Activated CD8-positive, alpha-beta T cell treated with anti-CD3 and anti-CD28 coated beads for 36 hours (primary cell): ENCODE measurements at regions of chr10 and their contacts with region 1.

Region 1: GRCh38 chr10:28393966-28394568 is 91.2 kb upstream of the MPP7 start:
- DNase-seq: peak; percentile 80
- ATAC-seq: peak; percentile 89
- H3K4me3 Mint-ChIP-seq: no peak overlapping the region
- H3K27ac Mint-ChIP-seq: no peak overlapping the region
- H3K4me1 Mint-ChIP-seq: peaks cover 4% of the 10 kb centered on the region
- H3K27me3 Mint-ChIP-seq: peaks cover 2% of the 10 kb centered on the region
- CTCF ChIP-seq: peak; percentile 94

Region 2: DNA sequence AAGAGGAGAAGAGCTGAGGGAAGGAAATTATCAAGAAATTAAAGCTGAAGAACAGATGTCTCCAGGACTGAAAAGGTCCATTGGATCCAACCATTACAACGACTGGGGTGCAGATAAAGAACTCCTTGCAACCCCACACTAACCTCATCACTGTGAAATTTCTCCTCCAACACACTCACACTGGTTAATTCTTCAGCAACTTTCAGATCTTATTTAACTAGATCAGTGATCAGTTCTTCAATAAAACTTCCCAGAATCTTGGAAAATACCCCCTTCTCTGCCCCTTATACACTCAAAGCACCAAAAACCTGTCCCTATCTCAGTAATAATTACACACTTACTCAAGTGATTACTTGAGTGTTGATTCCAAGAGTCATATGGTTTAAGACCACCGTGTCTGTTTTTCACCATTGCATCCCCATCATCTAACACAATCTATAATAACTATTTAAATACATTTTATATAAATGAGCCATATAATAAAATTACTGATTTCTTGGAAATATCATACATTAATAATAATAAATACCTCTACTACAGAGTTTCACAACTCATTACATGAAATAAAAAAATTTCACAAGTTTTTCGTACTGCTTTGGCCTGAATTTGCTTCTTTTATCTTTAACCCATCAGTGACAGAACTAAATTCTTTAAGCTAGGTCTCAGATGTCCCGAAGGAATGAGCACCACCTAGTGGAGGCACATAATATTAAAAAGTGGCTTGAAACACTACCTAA is 214.9 kb before region 1 on chr10:
- CTCF ChIA-PET with region 1: interaction called, 11 read pairs
- POLR2A ChIA-PET with region 1: no interaction called
- intact Hi-C with region 1: no loop called
- DNase-seq: peak; percentile 59
- ATAC-seq: peak; percentile 43
- H3K4me3 Mint-ChIP-seq: peak overlapping the region; percentile 70
- H3K27ac Mint-ChIP-seq: peak overlapping the region; percentile 91
- H3K4me1 Mint-ChIP-seq: peaks cover 37% of the 10 kb centered on the region
- H3K27me3 Mint-ChIP-seq: no peaks in the 10 kb centered on the region
- CTCF ChIP-seq: peak; percentile 78

Region 3: GRCh38 chr10:28241741-28242399 is 152.2 kb before region 1 on chr10:
- CTCF ChIA-PET with region 1: interaction called, 28 read pairs
- POLR2A ChIA-PET with region 1: no interaction called
- intact Hi-C with region 1: no loop called
- DNase-seq: peak; percentile 65
- ATAC-seq: peak; percentile 83
- H3K4me3 Mint-ChIP-seq: no peak overlapping the region
- H3K27ac Mint-ChIP-seq: no peak overlapping the region
- H3K4me1 Mint-ChIP-seq: peaks cover 27% of the 10 kb centered on the region
- H3K27me3 Mint-ChIP-seq: no peaks in the 10 kb centered on the region
- CTCF ChIP-seq: peak; percentile 93

Region 4: DNA sequence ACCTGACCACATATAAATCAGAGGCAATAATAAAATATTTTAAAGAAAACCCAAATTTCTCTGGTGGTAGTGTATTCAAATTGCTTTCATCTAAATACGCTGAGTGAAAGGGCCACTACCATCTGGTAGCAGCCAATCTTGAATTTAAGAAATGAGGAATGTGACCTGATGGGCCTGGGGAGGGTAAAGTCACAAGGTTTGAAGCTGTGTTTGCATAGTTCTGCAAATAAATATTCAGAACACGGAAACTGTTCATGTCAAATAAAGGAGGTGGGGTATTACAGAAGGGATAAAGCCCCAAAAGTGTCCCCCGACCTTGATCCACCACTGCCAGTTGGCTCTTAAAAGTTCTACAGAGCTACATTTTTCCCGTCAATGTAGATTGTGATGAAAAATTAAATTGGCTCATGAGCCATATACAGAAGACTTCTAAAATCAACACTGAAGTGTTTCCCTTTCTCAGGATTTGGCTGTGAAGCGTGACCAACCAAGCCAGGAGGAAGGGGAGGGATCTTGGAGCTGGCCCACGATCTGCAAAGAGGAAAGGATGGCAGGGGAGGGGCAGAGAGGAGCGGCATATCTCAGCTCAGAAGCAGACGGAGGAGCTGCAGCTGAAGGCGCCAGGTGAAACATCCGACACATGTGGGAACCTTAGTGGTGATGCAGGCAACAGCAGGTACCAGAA is 130.8 kb before region 1 on chr10:
- CTCF ChIA-PET with region 1: interaction called, 12 read pairs
- POLR2A ChIA-PET with region 1: no interaction called
- intact Hi-C with region 1: no loop called
- DNase-seq: no peak
- ATAC-seq: no peak
- H3K4me3 Mint-ChIP-seq: no peak overlapping the region
- H3K27ac Mint-ChIP-seq: no peak overlapping the region
- H3K4me1 Mint-ChIP-seq: peaks cover 14% of the 10 kb centered on the region
- H3K27me3 Mint-ChIP-seq: no peaks in the 10 kb centered on the region
- CTCF ChIP-seq: no peak

Region 5: GRCh38 chr10:28326516-28327490 is 67.3 kb before region 1 on chr10:
- CTCF ChIA-PET with region 1: interaction called, 22 read pairs
- POLR2A ChIA-PET with region 1: no interaction called
- intact Hi-C with region 1: no loop called
- DNase-seq: no peak
- ATAC-seq: peak; percentile 43
- H3K4me3 Mint-ChIP-seq: peak overlapping the region; percentile 61
- H3K27ac Mint-ChIP-seq: peak overlapping the region; percentile 83
- H3K4me1 Mint-ChIP-seq: peaks cover 58% of the 10 kb centered on the region
- H3K27me3 Mint-ChIP-seq: no peaks in the 10 kb centered on the region
- CTCF ChIP-seq: no peak

Region 6: GRCh38 chr10:28463676-28464395 is 69.8 kb after region 1 on chr10:
- CTCF ChIA-PET with region 1: no interaction called
- POLR2A ChIA-PET with region 1: no interaction called
- intact Hi-C with region 1: no loop called
- DNase-seq: no peak
- ATAC-seq: no peak
- H3K4me3 Mint-ChIP-seq: no peak overlapping the region
- H3K27ac Mint-ChIP-seq: no peak overlapping the region
- H3K4me1 Mint-ChIP-seq: no peaks in the 10 kb centered on the region
- H3K27me3 Mint-ChIP-seq: peaks cover 7% of the 10 kb centered on the region
- CTCF ChIP-seq: no peak

Region 7: DNA sequence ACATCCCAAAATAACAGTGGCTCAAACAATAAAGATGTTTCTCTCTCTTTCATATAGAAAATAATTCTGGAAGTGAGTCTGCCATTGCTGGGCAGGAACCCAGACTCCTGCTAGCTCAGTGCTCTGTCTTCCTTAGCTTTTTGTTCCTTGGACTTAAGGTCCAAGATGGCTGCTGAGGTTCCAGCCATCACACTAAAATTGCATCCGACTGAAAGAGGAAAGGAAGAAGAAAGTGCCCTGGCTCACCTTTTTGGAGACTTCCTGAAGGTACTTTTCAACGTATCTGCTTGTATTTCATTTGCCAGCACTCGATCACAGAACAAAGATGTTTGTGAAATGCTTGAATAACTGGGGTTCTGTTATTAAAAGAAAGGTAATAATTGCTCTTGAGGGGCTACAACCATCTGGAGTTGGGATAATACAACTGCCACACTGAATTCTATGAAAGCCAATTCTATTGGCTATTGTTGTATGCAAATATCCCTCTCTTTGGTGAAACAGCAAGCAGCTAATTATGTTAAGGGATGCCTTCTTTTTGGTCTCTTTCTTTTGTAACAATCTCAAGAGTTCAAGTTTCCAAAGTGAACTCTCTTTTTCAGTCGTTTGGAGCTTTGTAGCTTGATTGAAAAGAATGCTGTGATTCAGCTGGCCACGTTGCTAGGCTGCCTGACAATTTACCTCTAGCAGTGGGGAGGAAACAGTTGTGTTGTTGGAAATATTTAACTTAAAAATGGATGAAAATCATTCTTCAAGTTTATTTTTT is 367.2 kb after region 1 on chr10:
- CTCF ChIA-PET with region 1: no interaction called
- POLR2A ChIA-PET with region 1: no interaction called
- intact Hi-C with region 1: no loop called
- DNase-seq: no peak
- ATAC-seq: no peak
- H3K4me3 Mint-ChIP-seq: no peak overlapping the region
- H3K27ac Mint-ChIP-seq: no peak overlapping the region
- H3K4me1 Mint-ChIP-seq: no peaks in the 10 kb centered on the region
- H3K27me3 Mint-ChIP-seq: peaks cover 17% of the 10 kb centered on the region
- CTCF ChIP-seq: no peak